Endothelial cell of umbilical vein (primary cell): ENCODE measurements at regions of chr12 and their contacts with region 1.

Region 1: GRCh38 chr12:49225556-49226181 is 36.8 kb upstream of the TUBA1A start:
- DNase-seq: peak; percentile 56
- H3K4me3 ChIP-seq: no peak overlapping the region
- H3K27ac ChIP-seq: no peak overlapping the region
- H3K4me1 ChIP-seq: peaks cover 5% of the 10 kb centered on the region
- H3K27me3 ChIP-seq: no peaks in the 10 kb centered on the region
- CTCF ChIP-seq: peak; percentile 17 to 28
- POLR2A ChIP-seq: no peak

Region 2: DNA sequence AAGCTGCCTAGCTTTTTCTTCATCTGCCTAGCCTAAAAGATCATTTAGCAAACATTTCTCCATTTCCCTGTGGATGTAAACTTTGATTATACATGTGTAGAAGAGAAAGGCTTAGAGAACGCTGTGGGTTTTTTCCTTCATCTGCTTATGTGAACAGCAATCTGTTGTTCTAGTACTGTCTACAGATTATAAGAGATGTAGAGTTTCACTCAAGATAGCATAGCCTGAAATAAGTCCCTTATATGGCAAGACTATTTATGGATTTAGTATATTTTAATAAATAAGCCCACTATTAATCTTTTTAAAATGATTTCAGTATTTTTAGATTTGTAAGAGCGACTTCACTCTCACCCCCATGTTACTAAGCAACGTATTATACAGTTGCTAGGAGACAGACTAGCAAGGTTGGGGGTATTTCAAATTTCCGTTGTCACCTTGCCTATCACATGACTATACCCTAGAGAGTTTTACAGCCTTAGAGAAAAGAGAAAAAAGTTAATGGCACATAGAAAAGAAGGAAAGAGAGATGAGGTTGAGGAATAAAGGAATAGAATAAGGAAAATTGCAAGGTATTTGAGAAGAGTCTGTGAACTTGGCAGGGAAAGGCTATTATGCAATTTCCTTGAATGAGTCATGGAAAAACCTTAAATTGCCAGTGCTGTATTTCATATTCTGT is 24.6 kb before region 1 on chr12:
- CTCF ChIA-PET with region 1: interaction called, 12 read pairs
- POLR2A ChIA-PET with region 1: no interaction called
- dilution Hi-C with region 1: no loop called
- intact Hi-C with region 1: no loop called
- DNase-seq: peak; percentile 93
- H3K4me3 ChIP-seq: peak overlapping the region in 1 of 3 experiments; percentile 44
- H3K27ac ChIP-seq: peak overlapping the region; percentile 74
- H3K4me1 ChIP-seq: peaks cover 33% of the 10 kb centered on the region
- H3K27me3 ChIP-seq: no peaks in the 10 kb centered on the region
- CTCF ChIP-seq: no peak
- POLR2A ChIP-seq: no peak

Region 3: GRCh38 chr12:49208676-49209075 is 17.0 kb before region 1 on chr12:
- CTCF ChIA-PET with region 1: interaction called, 10 read pairs
- POLR2A ChIA-PET with region 1: no interaction called
- dilution Hi-C with region 1: no loop called
- intact Hi-C with region 1: no loop called
- DNase-seq: no peak
- H3K4me3 ChIP-seq: no peak overlapping the region
- H3K27ac ChIP-seq: no peak overlapping the region
- H3K4me1 ChIP-seq: no peaks in the 10 kb centered on the region
- H3K27me3 ChIP-seq: no peaks in the 10 kb centered on the region
- CTCF ChIP-seq: no peak
- POLR2A ChIP-seq: no peak

Region 4: DNA sequence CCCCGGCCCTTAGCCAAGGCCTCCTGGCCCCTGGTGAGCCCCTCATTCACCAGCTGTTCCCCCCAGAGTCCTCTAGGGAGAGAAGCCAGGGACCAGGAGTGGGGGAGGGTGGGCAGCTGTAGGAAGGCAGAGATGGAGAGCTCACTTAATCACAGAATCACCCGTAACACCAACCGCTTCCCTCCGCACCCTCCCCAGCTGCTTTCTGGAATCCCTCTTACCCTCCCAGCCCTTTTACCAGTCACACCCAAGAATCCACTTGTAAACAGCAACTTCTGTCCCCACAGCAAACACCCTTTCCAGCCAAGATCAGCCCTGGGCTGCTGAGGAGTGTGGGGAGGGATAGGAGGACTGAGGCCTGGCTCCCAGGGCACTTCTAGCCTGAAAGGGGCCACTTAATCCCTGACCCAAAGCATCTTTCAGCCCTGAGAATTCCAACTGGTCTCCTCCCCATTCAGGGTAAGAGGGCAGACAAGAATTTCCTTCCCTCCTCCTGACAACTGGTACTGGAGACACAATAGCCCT is 583.8 kb after region 1 on chr12:
- CTCF ChIA-PET with region 1: no interaction called
- POLR2A ChIA-PET with region 1: no interaction called
- dilution Hi-C with region 1: no loop called
- intact Hi-C with region 1: no loop called
- DNase-seq: no peak
- H3K4me3 ChIP-seq: no peak overlapping the region
- H3K27ac ChIP-seq: no peak overlapping the region
- H3K4me1 ChIP-seq: no peaks in the 10 kb centered on the region
- H3K27me3 ChIP-seq: no peaks in the 10 kb centered on the region
- CTCF ChIP-seq: no peak
- POLR2A ChIP-seq: no peak